ENCODE measurements at regions of chr21 and their contacts with region 1.

Region 1: GRCh38 chr21:36847171-36847570 is 119.3 kb downstream of the HLCS start:
- DNase-seq: peak; percentile 67
- H3K4me3 ChIP-seq: no peak overlapping the region
- H3K27ac ChIP-seq: peak overlapping the region; percentile 43
- H3K4me1 ChIP-seq: peaks cover 25% of the 10 kb centered on the region
- H3K27me3 ChIP-seq: no peaks in the 10 kb centered on the region
- CTCF ChIP-seq: no peak
- POLR2A ChIP-seq: no peak

Region 2: GRCh38 chr21:36615274-36615964 is 231.8 kb before region 1 on chr21:
- CTCF ChIA-PET with region 1: no interaction called
- POLR2A ChIA-PET with region 1: no interaction called
- dilution Hi-C with region 1: no loop called
- intact Hi-C with region 1: no loop called
- DNase-seq: no peak
- H3K4me3 ChIP-seq: no peak overlapping the region
- H3K27ac ChIP-seq: no peak overlapping the region
- H3K4me1 ChIP-seq: peaks cover under 1% of the 10 kb centered on the region
- H3K27me3 ChIP-seq: peaks cover 10 to 11% of the 10 kb centered on the region in 2 experiments
- CTCF ChIP-seq: peak; percentile 17 to 37
- POLR2A ChIP-seq: no peak

Region 3: DNA sequence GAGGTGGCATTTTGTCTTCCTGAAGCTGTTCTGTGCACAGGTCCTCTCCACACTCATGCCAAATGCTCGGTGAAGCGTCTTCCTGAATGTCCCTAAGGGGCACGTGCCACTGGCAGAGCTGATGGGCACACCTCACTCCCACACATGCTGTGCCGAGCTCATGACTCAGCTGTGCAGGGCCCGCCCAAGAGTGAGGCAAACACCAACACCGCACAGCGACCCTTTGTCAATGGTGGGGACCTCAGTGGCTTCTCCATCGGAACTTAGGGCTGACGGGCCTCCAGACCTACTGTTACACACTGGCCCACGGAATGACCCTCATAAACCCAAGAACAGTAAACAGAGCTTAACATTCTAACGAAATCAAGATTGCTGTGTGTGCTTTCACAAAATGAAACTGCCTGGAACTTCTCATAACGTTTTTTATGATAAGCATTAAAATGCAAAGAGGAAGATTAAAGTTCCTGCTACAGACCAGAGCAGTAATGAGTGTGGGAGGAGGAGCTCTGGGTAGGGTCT is 59.0 kb before region 1 on chr21:
- CTCF ChIA-PET with region 1: no interaction called
- POLR2A ChIA-PET with region 1: no interaction called
- dilution Hi-C with region 1: no loop called
- intact Hi-C with region 1: no loop called
- DNase-seq: no peak
- H3K4me3 ChIP-seq: no peak overlapping the region
- H3K27ac ChIP-seq: no peak overlapping the region
- H3K4me1 ChIP-seq: no peaks in the 10 kb centered on the region
- H3K27me3 ChIP-seq: no peaks in the 10 kb centered on the region
- CTCF ChIP-seq: no peak
- POLR2A ChIP-seq: no peak

Region 4: GRCh38 chr21:36799869-36800268 is 47.3 kb before region 1 on chr21:
- CTCF ChIA-PET with region 1: no interaction called
- POLR2A ChIA-PET with region 1: no interaction called
- dilution Hi-C with region 1: no loop called
- intact Hi-C with region 1: loop called (anchors 5 kb)
- DNase-seq: peak; percentile 81
- H3K4me3 ChIP-seq: no peak overlapping the region
- H3K27ac ChIP-seq: peak overlapping the region; percentile 5
- H3K4me1 ChIP-seq: peaks cover 10% of the 10 kb centered on the region
- H3K27me3 ChIP-seq: no peaks in the 10 kb centered on the region
- CTCF ChIP-seq: no peak
- POLR2A ChIP-seq: no peak

Region 5: DNA sequence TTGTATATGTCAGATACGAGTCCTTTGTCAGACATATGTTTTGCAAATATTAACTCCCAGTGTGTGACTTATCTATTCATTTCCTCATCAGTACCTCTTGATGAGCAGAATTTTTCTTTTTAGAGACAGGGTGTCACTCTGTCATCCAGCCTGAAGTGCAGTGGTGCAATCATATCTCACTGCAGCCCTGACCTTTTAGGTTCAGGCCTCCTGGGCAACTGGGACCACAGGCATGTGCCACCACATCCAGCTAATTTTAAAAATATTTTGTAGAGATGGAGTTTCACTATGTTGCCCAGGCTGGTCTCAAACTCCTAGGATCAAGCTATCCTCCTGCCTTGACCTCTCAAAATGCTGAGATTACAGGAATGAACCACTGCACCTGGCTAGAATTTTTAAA is 26.3 kb after region 1 on chr21:
- CTCF ChIA-PET with region 1: no interaction called
- POLR2A ChIA-PET with region 1: no interaction called
- dilution Hi-C with region 1: no loop called
- intact Hi-C with region 1: no loop called
- DNase-seq: no peak
- H3K4me3 ChIP-seq: no peak overlapping the region
- H3K27ac ChIP-seq: no peak overlapping the region
- H3K4me1 ChIP-seq: no peaks in the 10 kb centered on the region
- H3K27me3 ChIP-seq: no peaks in the 10 kb centered on the region
- CTCF ChIP-seq: no peak
- POLR2A ChIP-seq: no peak

Measured in endothelial cell of umbilical vein (primary cell).